Transverse colon (tissue), 4 donors: ENCODE measurements at regions of chr12 and their contacts with region 1.

Region 1: GRCh38 chr12:93569656-93570551 is 2.6 kb upstream of the SOCS2 start:
- DNase-seq: peak; percentile 90
- H3K4me3 ChIP-seq: peak overlapping the region; percentile 58 to 92 (median 85)
- H3K27ac ChIP-seq: peak overlapping the region; percentile 93 to 98 (median 97)
- H3K4me1 ChIP-seq: peaks cover 0 to 33% (median 21%) of the 10 kb centered on the region in 4 donors
- H3K27me3 ChIP-seq: no peaks in the 10 kb centered on the region
- CTCF ChIP-seq: peak; percentile 75 to 86 (median 80)
- EP300 ChIP-seq: no peak
- POLR2A ChIP-seq: no peak

Region 2: GRCh38 chr12:93279565-93280412 is 290.1 kb before region 1 on chr12:
- in situ Hi-C with region 1: no loop called
- intact Hi-C with region 1: no loop called
- DNase-seq: no peak
- H3K4me3 ChIP-seq: no peak overlapping the region
- H3K27ac ChIP-seq: no peak overlapping the region
- H3K4me1 ChIP-seq: no peaks in the 10 kb centered on the region
- H3K27me3 ChIP-seq: no peaks in the 10 kb centered on the region
- CTCF ChIP-seq: no peak
- EP300 ChIP-seq: no peak
- POLR2A ChIP-seq: no peak

Region 3: DNA sequence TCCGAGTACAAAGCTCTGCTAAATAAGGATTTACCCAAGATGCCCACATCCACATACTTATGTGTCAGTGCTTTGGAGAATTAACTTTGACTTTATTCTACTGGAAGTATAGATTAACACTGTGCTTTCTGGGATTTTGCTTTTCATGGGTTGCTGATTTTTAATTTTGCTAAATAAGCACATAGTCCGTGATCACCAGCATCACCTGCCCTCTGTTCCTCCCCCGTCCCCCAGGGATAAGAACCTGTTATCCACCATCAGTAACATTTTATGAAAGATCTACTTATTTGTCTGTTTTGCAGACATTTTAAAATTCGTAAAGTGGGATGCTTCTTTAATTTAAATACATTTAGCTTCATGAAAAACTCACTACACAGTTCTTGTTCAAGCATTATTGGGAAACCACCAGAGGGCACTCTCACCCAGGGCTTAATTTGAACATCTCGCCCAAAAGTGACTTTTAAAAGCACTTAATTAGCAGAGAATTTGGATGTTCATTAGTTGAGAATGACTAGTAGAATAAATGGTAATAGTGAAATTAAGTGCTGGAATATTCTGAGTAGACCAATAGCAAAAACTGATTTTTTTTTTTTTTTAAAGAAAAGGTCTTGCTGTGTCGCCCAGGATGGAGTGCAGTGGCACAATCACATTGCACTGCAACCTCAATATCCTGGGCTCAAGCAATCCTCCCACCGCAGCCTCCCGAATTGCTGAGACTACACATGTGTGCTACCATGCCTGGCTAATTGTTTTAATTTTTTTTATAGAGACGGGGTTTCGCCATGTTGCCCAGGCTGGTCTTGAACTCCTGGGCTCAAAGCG is 66.9 kb before region 1 on chr12:
- in situ Hi-C with region 1: no loop called
- intact Hi-C with region 1: loop called (anchors 10 kb)
- DNase-seq: peak; percentile 43
- H3K4me3 ChIP-seq: no peak overlapping the region
- H3K27ac ChIP-seq: no peak overlapping the region
- H3K4me1 ChIP-seq: no peaks in the 10 kb centered on the region
- H3K27me3 ChIP-seq: no peaks in the 10 kb centered on the region
- CTCF ChIP-seq: peak; percentile 71 to 80 (median 74)
- EP300 ChIP-seq: no peak
- POLR2A ChIP-seq: no peak

Region 4: DNA sequence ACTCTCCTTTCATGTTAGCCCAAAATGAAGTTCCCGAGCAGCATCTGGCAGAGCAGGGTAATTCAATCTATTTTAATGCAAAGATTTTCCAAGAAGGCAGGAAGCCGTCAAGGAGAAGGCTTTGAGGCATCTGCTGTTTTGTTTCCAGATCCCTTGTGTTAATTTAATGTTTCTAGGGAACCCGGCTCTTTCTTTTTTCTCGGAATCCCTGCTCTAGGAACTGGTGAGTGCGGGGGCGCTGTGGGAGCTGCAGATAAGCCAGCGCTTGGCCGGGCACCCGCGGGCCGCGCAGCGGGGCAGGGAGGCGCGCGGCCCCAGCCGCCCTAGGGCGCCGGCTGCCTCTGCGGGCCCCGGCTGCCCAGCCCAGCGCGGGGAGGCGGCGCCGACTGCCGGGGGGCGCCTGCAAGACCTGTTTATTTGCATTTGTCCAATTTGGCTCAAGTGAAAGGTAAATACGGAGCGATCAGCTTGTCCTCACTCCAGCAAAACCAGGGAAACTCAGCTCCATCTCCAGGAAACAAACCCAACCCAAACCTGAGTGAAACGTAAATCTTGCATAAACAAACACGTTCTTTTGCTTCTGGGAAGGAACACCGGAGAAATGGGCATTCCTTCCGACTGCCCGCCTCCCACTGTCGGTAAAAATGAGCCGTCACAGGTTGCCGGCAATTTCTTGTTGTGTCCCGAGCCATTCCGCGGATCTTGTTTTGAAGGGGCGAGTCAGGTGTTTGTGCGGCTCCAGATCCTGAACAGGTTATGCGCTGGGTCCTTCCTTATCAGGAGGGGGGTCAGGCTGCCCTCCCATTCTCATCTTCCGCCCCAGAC is 172.4 kb after region 1 on chr12:
- in situ Hi-C with region 1: loop called in 3 of 4 experiments (anchors 10 to 25 kb)
- intact Hi-C with region 1: loop called (anchors 5 kb)
- DNase-seq: peak; percentile 70
- H3K4me3 ChIP-seq: peak overlapping the region; percentile 30 to 68 (median 50)
- H3K27ac ChIP-seq: peak overlapping the region; percentile 80 to 90 (median 90)
- H3K4me1 ChIP-seq: peaks cover 5 to 54% (median 26%) of the 10 kb centered on the region in 4 donors
- H3K27me3 ChIP-seq: no peaks in the 10 kb centered on the region
- CTCF ChIP-seq: peak in 4 of 5 experiments; percentile 7 to 29 (median 22)
- EP300 ChIP-seq: peak; percentile 93
- POLR2A ChIP-seq: no peak

Region 5: GRCh38 chr12:93990832-93991803 is 421.2 kb after region 1 on chr12:
- in situ Hi-C with region 1: loop called in 1 of 4 experiments (anchors 25 kb)
- intact Hi-C with region 1: no loop called
- DNase-seq: no peak
- H3K4me3 ChIP-seq: no peak overlapping the region
- H3K27ac ChIP-seq: no peak overlapping the region
- H3K4me1 ChIP-seq: no peaks in the 10 kb centered on the region
- H3K27me3 ChIP-seq: no peaks in the 10 kb centered on the region
- CTCF ChIP-seq: peak in 3 of 5 experiments; percentile 10 to 17 (median 16)
- EP300 ChIP-seq: no peak
- POLR2A ChIP-seq: no peak

Region 6: DNA sequence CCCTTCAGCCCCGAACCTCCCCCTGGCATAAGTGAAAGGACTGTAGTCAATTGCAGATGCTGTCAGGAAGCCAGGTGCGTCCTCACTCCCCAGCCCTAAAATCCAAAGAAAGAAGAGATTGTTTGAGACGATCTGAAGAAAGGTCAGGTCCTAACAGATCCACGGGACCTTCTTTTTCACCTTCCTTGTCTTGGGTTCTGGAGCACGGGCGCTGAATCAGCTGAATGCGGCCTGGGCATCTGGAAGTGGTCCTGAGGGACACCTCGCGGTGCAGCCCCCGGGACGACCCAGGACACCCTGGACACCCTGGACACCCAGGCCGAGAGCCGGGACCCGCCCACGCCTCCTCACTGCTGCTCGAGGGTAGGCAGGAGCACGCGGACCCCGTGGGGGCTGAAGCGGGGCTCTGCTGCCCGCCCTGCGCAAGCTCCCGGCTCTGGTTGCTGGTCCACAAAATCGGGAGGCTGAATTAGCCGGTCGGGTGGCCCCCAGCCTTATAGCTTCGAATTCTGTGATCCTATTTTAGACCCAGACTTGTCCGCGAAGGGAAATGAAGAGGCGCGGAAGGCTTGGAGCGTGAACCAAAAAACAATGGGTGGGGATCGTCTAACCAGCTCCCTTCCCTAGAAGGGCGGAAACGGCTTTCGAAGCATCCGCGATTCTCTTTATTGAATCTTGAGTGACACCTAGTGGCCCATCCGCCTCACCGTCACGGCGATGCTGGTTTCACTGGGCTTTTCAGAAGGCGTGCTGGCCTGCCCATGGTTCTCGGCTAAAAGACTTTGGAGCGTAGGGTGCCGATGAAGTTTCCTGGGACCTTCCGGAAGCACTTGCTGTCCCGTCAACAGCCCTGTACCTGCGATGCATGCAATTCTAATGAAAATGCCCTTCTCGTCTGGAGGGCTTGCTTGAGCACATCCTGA is 532.1 kb after region 1 on chr12:
- in situ Hi-C with region 1: loop called in 2 of 4 experiments (anchors 5 to 10 kb)
- intact Hi-C with region 1: loop called (anchors 2 kb)
- DNase-seq: peak; percentile 90
- H3K4me3 ChIP-seq: peak overlapping the region; percentile 46 to 68 (median 52)
- H3K27ac ChIP-seq: peak overlapping the region; percentile 43 to 65 (median 52)
- H3K4me1 ChIP-seq: peaks cover 2 to 21% (median 5%) of the 10 kb centered on the region in 4 donors
- H3K27me3 ChIP-seq: no peaks in the 10 kb centered on the region
- CTCF ChIP-seq: peak; percentile 72 to 89 (median 77)
- EP300 ChIP-seq: no peak
- POLR2A ChIP-seq: no peak